ENCODE measurements at regions of chr19 and their contacts with region 1.

Region 1: GRCh38 chr19:2950286-2951124 is 5.7 kb upstream of the ZNF77 start:
- DNase-seq: peak; percentile 100
- ATAC-seq: peak; percentile 99 to 100
- H3K4me3 ChIP-seq: peak overlapping the region; percentile 63 to 88 (median 81)
- H3K27ac ChIP-seq: peak overlapping the region; percentile 88 to 97 (median 92)
- H3K4me1 ChIP-seq: peaks cover 14 to 18% of the 10 kb centered on the region in 2 donors
- H3K27me3 ChIP-seq: no peaks in the 10 kb centered on the region
- CTCF ChIP-seq: no peak
- POLR2A ChIP-seq: peak; percentile 85 to 90

Region 2: DNA sequence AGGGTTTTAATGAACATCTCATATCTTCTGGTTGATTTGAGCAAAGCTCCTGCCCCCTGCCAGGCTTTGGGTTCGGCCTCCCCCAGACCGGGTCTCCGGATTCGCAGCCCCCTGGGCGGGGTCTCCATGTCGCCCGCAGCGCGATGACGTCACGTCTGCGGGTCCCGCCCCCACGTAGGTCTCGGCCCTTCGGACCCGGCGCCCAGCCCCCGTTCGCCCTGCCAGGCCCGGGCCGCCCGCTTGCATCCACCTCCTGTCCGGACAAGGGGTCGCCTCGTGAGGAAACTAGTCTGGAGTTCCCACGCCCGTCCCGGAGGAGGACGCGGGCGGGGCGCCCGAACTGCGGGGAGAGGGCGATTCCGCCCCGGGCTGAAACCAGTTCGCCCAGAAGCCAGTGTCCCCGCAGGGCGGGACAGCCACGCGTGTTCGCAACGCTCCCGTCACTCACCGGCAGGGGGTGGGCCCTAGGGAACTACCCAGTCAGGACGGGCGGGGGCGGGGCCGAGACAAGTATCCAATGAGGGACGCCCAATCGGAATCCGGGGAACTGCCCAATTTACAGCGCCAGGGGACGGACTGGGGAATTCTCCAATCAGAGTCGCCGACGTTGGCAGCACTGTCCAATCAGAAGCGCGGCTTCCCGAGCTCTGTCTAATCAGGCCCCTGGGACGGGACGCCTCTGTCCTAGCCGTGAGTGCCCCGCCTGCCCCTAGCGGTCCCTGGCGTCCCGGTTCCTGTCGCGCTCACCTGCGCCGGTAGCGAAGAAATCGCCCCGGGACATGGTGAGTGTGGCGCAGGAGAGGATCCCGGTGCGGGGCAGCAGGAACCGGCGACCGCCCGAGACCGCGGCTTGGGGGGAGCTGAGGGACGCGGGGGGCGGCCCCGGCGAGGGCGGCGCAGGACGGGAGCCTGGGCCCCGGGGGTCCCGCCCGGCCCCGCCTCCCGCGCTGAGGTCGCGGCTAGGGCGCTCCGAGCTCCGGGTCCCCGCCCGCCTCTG is 109.4 kb before region 1 on chr19 and contains the start of gene ZNF555:
- in situ Hi-C with region 1: no loop called
- intact Hi-C with region 1: loop called (anchors 2 kb)
- DNase-seq: peak; percentile 99
- ATAC-seq: peak; percentile 99
- H3K4me3 ChIP-seq: peak within 1 kb of the TSS; percentile 69 to 85 (median 74)
- H3K27ac ChIP-seq: peak within 1 kb of the TSS; percentile 80 to 92 (median 86)
- H3K4me1 ChIP-seq: peaks cover 15 to 20% of the 10 kb centered on the region in 2 donors
- H3K27me3 ChIP-seq: no peaks in the 10 kb centered on the region
- CTCF ChIP-seq: peak; percentile 38 to 75 (median 68)
- POLR2A ChIP-seq: peak; percentile 56 to 79
- total RNA-seq, gene ZNF555: 1.9 to 5.5 (median 2.7) TPM

Region 3: DNA sequence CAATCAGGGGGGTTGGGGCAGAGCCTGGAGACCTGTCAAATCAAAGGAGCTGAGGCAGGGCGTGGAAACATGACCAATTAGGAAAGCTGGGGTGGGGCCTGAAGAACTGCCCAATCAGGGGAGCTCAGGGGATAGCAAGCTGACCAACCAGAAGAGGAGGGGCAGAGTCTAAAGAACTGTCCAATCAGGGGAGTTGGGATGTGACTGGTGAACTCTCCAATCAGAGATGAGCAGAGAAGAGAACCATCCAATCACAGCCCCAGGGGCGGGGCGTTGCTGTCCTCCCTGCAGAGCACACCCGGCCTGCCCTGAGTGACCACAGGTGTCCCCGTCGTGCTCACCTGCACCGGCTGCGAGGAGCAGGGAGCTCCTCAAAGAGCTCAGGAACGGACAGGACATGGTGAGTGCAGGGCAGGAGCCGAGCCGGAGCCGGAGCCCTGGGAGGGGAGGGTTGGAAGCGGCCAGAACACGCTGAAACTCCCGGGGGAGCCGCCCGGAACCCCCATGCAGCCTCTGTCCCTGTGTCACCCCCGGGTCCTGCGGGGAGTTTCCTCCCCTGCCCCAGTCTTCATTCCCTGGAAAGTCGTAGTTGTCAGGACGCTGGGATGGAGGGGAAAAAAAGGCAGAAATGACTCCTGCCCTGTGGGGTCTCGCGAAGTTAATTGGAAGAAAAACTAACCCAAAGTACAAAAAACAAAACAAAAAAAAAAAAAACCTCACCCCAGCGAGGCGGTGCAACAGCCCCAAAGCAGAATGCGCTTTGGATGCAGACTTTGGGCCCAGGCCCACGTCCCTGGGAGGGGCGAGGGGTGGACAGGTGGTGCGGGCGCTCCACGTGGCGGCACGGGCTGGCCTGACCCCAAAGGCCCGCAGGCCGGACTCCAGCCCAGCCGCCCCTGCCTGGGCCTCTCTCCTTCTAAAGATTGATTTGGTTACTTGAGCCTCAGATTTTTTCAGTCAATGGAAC is 83.2 kb before region 1 on chr19 and contains the start of gene ZNF556:
- in situ Hi-C with region 1: no loop called
- intact Hi-C with region 1: no loop called
- DNase-seq: peak; percentile 55 to 84
- ATAC-seq: peak; percentile 98
- H3K4me3 ChIP-seq: peak within 1 kb of the TSS in 3 of 4 donors; percentile 50 to 56 (median 52)
- H3K27ac ChIP-seq: peak within 1 kb of the TSS in 3 of 4 donors; percentile 37 to 74 (median 74)
- H3K4me1 ChIP-seq: no peaks in the 10 kb centered on the region
- H3K27me3 ChIP-seq: no peaks in the 10 kb centered on the region
- CTCF ChIP-seq: peak in 1 of 5 experiments; percentile 12
- POLR2A ChIP-seq: peak; percentile 35 to 37
- total RNA-seq, gene ZNF556: 0.26 to 0.34 TPM in 2 of 4 donors, not detected in the others

Region 4: DNA sequence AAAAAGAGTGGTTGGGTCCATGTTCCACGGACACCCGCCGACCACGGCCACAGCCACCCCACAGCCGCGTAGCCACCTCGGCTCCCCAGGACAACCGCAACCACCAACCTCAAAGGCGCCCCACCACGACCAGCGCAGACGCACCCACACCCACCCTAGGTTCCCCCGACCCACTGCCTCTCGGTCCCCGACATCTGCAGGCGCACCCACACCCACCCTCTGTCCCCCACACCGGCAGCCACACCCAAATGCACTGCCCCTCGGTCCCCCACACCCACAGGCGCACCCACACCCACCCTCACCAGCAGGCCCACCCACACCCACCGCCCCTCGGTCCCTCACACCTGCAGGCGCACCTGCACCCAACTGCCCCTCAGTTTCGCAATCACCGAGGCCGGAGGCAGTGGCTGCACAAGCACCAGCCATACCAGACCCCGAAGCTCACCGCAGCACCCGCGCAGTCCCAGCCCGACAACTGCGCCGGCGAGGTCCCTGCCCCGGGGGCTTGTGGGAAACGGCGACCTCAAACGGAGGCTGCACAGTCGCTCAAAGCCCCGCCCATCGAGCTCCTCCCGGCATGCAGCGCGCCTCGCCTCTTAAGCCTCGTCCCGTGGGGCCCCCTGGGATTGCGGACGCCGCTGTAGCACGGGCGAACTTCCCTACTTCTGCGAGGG is 24.0 kb before region 1 on chr19:
- in situ Hi-C with region 1: no loop called
- intact Hi-C with region 1: no loop called
- DNase-seq: no peak
- ATAC-seq: no peak
- H3K4me3 ChIP-seq: no peak overlapping the region
- H3K27ac ChIP-seq: no peak overlapping the region
- H3K4me1 ChIP-seq: no peaks in the 10 kb centered on the region
- H3K27me3 ChIP-seq: no peaks in the 10 kb centered on the region
- CTCF ChIP-seq: no peak
- POLR2A ChIP-seq: no peak

Region 5: GRCh38 chr19:2977001-2977685 is 26.6 kb after region 1 on chr19 and contains the start of gene TLE6:
- in situ Hi-C with region 1: no loop called
- intact Hi-C with region 1: loop called (anchors 1 kb)
- DNase-seq: peak; percentile 93 to 94
- ATAC-seq: peak; percentile 88 to 89
- H3K4me3 ChIP-seq: peak within 1 kb of the TSS; percentile 54 to 81 (median 66)
- H3K27ac ChIP-seq: peak within 1 kb of the TSS; percentile 48 to 81 (median 72)
- H3K4me1 ChIP-seq: peaks cover 37 to 46% of the 10 kb centered on the region in 2 donors
- H3K27me3 ChIP-seq: no peaks in the 10 kb centered on the region
- CTCF ChIP-seq: no peak
- POLR2A ChIP-seq: no peak
- total RNA-seq, gene TLE6: 0.62 to 1.2 TPM in 2 of 4 donors, not detected in the others

Region 6: GRCh38 chr19:3062168-3063102 is 111.9 kb after region 1 on chr19 and contains the start of gene TLE5:
- in situ Hi-C with region 1: loop called in 1 of 4 experiments (anchors 25 kb)
- intact Hi-C with region 1: no loop called
- DNase-seq: peak in 1 of 2 donors; percentile 57
- ATAC-seq: peak; percentile 72 to 79
- H3K4me3 ChIP-seq: peak within 1 kb of the TSS; percentile 78 to 92 (median 84)
- H3K27ac ChIP-seq: peak within 1 kb of the TSS; percentile 90 to 99 (median 96)
- H3K4me1 ChIP-seq: peaks cover 38 to 41% of the 10 kb centered on the region in 2 donors
- H3K27me3 ChIP-seq: no peaks in the 10 kb centered on the region
- CTCF ChIP-seq: no peak
- POLR2A ChIP-seq: peak; percentile 17 to 37
- total RNA-seq, gene TLE5: 437 to 686 (median 474) TPM

Region 7: DNA sequence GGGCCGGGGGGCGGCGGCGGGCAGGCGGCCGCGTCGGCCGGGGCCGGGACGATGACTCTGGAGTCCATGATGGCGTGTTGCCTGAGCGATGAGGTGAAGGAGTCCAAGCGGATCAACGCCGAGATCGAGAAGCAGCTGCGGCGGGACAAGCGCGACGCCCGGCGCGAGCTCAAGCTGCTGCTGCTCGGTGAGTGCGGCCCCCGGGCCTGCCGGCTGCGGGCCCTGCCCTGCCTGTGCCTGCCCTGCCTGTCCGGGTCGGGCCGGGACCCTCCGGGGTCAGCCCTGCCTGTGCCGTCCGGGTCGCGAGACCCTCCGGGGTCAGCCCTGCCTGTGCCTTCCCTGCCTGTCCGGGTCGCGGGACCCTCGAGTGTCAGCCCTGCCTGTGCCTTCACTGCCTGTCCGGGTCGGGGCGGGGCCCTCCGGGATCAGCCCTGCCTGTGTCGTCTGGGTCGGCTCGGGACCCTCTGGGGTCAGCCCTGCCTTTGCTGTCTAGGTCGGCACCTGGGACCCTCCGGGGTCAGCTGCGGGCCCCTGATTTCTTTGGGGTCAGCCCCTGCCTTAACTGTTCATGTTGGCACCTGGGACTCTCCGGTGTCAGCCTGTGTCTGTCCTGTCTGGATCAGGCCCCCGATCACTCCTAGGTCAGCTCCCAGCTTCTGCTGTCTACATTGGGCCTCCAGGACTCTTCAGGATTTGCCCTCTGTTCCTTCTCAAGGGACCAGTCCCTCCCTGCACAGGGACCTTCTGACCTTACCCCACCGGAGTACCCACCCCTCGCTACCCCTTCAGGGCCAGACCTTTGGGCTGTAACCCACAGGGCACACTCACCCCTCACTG is 144.3 kb after region 1 on chr19:
- in situ Hi-C with region 1: loop called in 2 of 4 experiments (anchors 10 to 25 kb)
- intact Hi-C with region 1: loop called (anchors 2 kb)
- DNase-seq: no peak
- ATAC-seq: no peak
- H3K4me3 ChIP-seq: peak overlapping the region; percentile 69 to 84 (median 78)
- H3K27ac ChIP-seq: peak overlapping the region; percentile 79 to 92 (median 85)
- H3K4me1 ChIP-seq: peaks cover 39 to 50% of the 10 kb centered on the region in 2 donors
- H3K27me3 ChIP-seq: no peaks in the 10 kb centered on the region
- CTCF ChIP-seq: no peak
- POLR2A ChIP-seq: no peak

Region 8: DNA sequence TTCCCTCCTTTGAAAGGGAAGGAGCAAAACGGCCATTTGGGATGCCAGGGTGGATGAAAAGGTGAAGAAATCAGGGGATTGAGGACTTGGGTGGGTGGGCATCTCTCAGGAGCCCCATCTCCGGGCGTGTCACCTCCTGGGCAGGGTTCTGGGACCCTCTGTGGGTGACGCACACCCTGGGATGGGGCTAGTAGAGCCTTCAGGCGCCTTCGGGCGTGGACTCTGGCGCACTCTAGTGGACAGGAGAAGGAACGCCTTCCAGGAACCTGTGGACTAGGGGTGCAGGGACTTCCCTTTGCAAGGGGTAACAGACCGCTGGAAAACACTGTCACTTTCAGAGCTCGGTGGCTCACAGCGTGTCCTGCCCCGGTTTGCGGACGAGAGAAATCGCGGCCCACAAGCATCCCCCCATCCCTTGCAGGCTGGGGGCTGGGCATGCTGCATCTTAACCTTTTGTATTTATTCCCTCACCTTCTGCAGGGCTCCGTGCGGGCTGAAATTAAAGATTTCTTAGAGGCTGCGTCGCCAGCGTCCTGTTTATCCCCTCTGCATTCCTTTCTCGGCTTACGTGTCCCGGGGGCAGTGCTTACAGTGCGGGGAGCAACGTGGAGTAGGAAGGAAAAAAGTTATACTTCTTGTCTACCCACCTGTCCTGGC is 212.9 kb after region 1 on chr19:
- in situ Hi-C with region 1: loop called in 2 of 4 experiments (anchors 10 to 25 kb)
- intact Hi-C with region 1: no loop called
- DNase-seq: no peak
- ATAC-seq: peak; percentile 63 to 74
- H3K4me3 ChIP-seq: no peak overlapping the region
- H3K27ac ChIP-seq: no peak overlapping the region
- H3K4me1 ChIP-seq: no peaks in the 10 kb centered on the region
- H3K27me3 ChIP-seq: no peaks in the 10 kb centered on the region
- CTCF ChIP-seq: peak; percentile 64 to 94 (median 88)
- POLR2A ChIP-seq: no peak

Measured in gastrocnemius medialis (tissue), 4 donors.